Activated CD4-positive, alpha-beta T cell treated with anti-CD3 and anti-CD28 coated beads, Interleukin-2, amount 10 ng/mL, durations not matched to agents 24 days and 14 days (primary cell): ENCODE measurements at regions of chr1 and their contacts with region 1.

Region 1: GRCh38 chr1:111139956-111140679 is at the starts of genes CEPT1 and DRAM2:
- DNase-seq: peak; percentile 98
- H3K4me3 Mint-ChIP-seq: peak within 1 kb of the TSS; percentile 92
- H3K27ac Mint-ChIP-seq: peak within 1 kb of the TSS; percentile 95
- H3K4me1 Mint-ChIP-seq: peaks cover 33% of the 10 kb centered on the region
- H3K27me3 Mint-ChIP-seq: no peaks in the 10 kb centered on the region
- total RNA-seq, gene CEPT1: 32.4 and 32.9 TPM in 2 replicates
- total RNA-seq, gene DRAM2: 25.8 and 26.5 TPM in 2 replicates

Region 2: GRCh38 chr1:110872745-110873720 is 267.1 kb before region 1 on chr1 and contains the start of gene CD53:
- intact Hi-C with region 1: loop called (anchors 10 kb)
- DNase-seq: peak; percentile 87
- H3K4me3 Mint-ChIP-seq: peak within 1 kb of the TSS; percentile 98
- H3K27ac Mint-ChIP-seq: peak within 1 kb of the TSS; percentile 97
- H3K4me1 Mint-ChIP-seq: peaks cover 34% of the 10 kb centered on the region
- H3K27me3 Mint-ChIP-seq: no peaks in the 10 kb centered on the region
- total RNA-seq, gene CD53: 185 and 190 TPM in 2 replicates

Region 3: DNA sequence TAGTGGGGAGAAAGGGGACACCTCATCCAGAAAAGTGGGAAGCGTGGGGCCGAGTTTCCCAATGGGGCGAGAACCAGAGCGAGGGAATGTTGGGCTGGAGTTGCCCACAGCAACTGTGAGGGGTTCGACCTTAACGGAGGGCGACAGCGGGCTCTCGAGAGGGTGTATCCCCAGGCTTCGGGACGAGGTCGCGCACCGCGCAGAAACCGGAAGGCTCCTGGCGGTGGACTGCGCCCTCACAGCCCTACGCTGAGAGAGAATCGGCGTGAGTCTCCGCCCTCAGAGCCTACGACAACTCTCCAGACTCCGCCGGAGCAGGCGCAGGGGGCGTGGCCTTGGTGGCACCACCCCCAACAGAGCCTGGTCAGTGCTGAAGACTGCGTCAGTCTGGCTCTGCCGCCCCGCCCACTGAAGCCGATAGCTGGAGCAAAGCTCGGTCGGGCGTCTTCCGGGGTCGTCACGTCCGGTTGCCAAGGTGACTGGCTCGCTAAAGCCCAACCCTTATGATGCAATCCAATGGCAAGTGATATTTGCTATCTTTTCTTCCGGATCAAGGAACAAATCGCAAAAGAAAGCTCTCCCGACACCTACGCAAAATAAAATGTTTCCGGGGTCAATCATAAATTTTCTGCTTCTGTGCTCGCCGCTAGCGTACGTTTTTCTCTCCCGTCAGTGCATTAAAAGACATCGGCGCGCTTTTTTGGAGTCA is 176.3 kb before region 1 on chr1 and contains the start of gene LRIF1:
- intact Hi-C with region 1: loop called (anchors 10 kb)
- DNase-seq: peak; percentile 100
- H3K4me3 Mint-ChIP-seq: peak within 1 kb of the TSS; percentile 89
- H3K27ac Mint-ChIP-seq: peak within 1 kb of the TSS; percentile 97
- H3K4me1 Mint-ChIP-seq: peaks cover 28% of the 10 kb centered on the region
- H3K27me3 Mint-ChIP-seq: peaks cover 10% of the 10 kb centered on the region
- total RNA-seq, gene LRIF1: 14.0 and 14.4 TPM in 2 replicates

Region 4: DNA sequence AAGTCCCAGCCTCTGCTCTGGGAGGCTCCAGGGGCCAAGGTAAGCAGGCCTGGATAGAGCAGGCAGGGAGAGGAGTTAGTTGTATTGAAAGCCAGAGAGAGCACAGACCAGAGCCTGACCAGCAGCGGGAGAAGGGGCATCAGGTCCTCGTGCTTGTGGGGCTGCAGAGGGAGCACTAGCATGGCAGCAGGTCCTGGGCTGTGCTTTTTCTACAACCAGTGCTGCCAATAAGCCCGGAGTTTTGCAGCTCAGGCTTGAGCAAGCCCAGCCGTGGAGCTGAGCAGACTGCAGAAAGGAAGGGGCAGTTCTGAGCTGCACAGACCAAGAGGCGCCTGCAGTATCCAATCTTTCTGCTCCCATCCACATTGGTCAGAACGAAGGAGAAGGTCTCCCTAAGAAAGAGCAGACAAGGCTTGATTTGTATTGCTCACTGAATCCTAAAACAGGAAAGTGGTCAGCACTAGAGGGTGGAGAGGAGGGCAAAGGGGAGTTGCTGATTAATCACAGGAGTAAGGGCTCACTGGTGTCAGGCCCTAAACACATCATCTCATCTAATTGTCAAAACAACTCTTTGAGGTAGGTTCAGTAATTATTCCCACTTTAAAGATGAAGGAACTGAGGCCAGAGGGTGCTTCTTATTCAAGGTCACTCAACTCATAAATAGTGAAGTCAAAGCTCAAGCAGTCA is 57.6 kb after region 1 on chr1:
- intact Hi-C with region 1: loop called (anchors 2 kb)
- DNase-seq: peak; percentile 87
- H3K4me3 Mint-ChIP-seq: peak overlapping the region; percentile 98
- H3K27ac Mint-ChIP-seq: peak overlapping the region; percentile 98
- H3K4me1 Mint-ChIP-seq: peaks cover 70% of the 10 kb centered on the region
- H3K27me3 Mint-ChIP-seq: no peaks in the 10 kb centered on the region

Region 5: DNA sequence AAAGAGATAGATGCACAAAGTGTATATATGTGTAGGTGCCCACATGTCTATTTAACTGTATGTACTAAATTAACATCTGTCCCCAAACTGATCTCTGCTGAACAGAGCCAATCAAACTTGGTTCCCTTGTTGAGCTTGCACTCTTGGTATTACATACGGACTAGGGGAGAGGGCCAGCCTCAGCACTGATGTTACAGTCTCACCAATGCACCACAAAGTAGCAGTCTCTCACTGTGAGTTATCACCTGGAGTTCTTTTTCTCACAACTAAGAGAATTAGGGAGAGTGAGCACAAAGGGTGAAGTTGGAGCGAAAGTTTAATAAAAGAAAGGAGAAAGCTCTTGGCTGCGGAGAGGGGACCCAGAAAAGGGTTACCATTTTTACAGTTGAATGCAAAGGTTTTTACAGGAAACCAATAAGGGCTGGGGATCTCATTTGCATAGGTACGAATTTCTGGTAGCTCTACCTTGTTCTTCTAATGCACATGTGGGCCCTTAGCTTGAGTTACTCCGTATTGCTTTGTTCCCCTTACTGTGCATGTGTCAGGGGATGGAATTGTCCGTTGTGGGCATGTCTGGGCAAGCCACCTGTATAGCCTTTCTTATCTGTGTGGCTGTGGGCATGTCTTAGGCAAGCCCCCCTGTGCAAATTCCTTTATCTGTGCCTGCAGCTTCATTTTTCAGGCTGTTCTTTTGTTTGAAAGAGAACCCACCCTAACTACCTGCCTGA is 74.1 kb after region 1 on chr1:
- intact Hi-C with region 1: loop called (anchors 1 kb)
- DNase-seq: peak; percentile 76
- H3K4me3 Mint-ChIP-seq: peak overlapping the region; percentile 84
- H3K27ac Mint-ChIP-seq: peak overlapping the region; percentile 92
- H3K4me1 Mint-ChIP-seq: peaks cover 69% of the 10 kb centered on the region
- H3K27me3 Mint-ChIP-seq: no peaks in the 10 kb centered on the region

Region 6: DNA sequence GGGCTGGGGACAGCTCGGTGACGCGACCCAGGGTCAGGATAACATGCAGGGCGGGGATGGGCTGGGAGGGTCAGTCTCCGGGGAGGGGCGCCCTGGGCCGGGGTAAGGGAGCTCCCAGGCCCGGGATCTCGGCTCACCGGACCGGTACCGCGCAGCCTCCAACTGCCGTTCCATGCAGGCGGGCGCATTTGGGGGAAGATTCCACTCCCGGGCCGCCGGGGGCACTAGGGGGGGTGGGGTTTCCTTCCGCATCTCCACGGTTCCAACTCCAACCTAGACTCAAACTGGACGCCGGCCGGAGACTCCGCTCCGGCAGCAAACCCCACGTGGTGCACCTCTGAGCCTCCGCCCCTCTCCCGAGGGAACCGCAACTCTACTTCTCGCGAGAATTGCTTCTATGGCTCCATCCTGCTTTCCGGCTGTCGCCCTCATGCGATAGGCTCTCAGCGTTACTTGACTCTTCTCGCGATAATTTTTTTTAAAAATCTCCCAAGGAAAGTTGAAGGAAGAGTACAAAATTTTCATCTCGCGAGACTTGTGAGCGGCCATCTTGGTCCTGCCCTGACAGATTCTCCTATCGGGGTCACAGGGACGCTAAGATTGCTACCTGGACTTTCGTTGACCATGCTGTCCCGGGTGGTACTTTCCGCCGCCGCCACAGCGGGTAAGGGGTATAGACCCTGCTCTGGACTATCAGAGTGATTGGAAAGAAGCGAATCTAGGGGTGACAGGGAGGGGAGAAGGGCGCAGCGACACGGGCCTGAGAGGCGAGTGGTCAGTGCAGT is 309.0 kb after region 1 on chr1 and contains the starts of genes ATP5PB and WDR77:
- intact Hi-C with region 1: loop called (anchors 2 kb)
- DNase-seq: peak; percentile 98
- H3K4me3 Mint-ChIP-seq: peak within 1 kb of the TSS; percentile 100
- H3K27ac Mint-ChIP-seq: peak within 1 kb of the TSS; percentile 98
- H3K4me1 Mint-ChIP-seq: peaks cover 68% of the 10 kb centered on the region
- H3K27me3 Mint-ChIP-seq: no peaks in the 10 kb centered on the region
- total RNA-seq, gene ATP5PB: 308 and 325 TPM in 2 replicates
- total RNA-seq, gene WDR77: 60.9 and 65.0 TPM in 2 replicates